ENCODE measurements at regions of chr15 and their contacts with region 1.

Region 1: GRCh38 chr15:97903971-97904572 is 56.4 kb upstream of the ARRDC4 start:
- DNase-seq: peak; percentile 74
- H3K4me3 Mint-ChIP-seq: peak overlapping the region; percentile 55
- H3K27ac Mint-ChIP-seq: no peak overlapping the region
- H3K4me1 Mint-ChIP-seq: peaks cover 19% of the 10 kb centered on the region
- H3K27me3 Mint-ChIP-seq: no peaks in the 10 kb centered on the region
- CTCF ChIP-seq: peak; percentile 80

Region 2: DNA sequence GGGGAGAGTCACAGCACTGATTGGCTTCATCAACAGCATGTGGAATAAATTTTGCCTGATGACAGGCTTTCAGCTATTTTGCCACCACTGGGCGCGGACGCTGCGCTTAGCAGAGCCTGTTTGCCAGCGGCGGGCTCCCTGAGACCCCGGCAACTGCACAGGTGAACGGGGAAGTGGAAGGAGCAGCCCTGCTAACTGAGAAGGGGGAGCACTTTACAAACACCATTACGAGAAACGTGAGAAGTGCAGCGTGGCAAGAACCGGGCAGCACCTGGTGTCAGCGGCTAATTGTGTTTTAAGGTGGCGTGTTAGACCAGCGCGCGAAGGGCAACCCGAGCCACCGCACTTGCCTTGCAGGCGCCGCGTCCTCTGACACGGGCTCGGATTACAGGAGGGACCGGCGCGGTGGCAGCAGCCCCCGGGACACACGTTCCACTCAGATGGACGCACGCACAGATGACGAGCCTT is 251.3 kb before region 1 on chr15:
- CTCF ChIA-PET with region 1: no interaction called
- POLR2A ChIA-PET with region 1: no interaction called
- intact Hi-C with region 1: no loop called
- DNase-seq: no peak
- H3K4me3 Mint-ChIP-seq: no peak overlapping the region
- H3K27ac Mint-ChIP-seq: no peak overlapping the region
- H3K4me1 Mint-ChIP-seq: no peaks in the 10 kb centered on the region
- H3K27me3 Mint-ChIP-seq: peaks cover 32% of the 10 kb centered on the region
- CTCF ChIP-seq: no peak

Region 3: DNA sequence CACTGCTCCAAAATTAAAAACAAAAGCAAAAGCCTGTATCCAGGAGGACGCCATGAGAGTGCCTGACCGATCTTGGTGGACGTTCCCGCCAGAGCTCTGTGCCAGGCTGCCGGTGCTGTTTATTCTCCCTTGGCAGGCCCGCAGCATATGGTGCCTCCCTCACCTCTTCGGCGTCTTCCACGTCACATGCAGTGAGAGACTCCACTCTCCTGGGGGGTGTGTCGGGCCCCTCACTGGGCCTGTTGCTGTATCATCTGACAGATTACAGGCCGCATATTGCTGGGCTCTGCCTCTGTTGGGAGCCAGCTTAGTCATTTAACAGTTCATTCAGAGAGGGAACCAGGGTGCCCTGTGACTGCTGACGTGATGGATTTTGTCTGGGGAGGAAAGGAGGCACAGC is 29.9 kb before region 1 on chr15:
- CTCF ChIA-PET with region 1: no interaction called
- POLR2A ChIA-PET with region 1: no interaction called
- intact Hi-C with region 1: no loop called
- DNase-seq: no peak
- H3K4me3 Mint-ChIP-seq: no peak overlapping the region
- H3K27ac Mint-ChIP-seq: no peak overlapping the region
- H3K4me1 Mint-ChIP-seq: no peaks in the 10 kb centered on the region
- H3K27me3 Mint-ChIP-seq: no peaks in the 10 kb centered on the region
- CTCF ChIP-seq: no peak

Region 4: DNA sequence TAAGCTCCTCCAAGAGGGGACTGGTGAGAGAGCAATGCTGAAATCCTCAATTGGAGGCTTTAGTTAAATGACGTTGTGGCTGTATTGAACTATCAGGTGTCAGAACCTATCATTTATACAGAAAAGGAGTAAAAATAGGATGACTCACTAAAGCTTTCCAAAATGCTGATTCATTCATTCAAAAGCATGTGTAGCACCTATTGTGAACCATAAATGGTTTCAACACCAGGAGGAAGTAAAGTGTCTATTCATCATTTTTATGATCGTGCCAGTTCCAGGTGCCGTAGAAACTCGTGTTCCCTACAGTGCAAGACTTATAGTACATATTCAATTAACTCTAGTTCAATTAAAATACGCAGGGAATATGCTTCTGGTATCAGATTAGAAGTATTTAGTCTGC is 10.1 kb before region 1 on chr15:
- CTCF ChIA-PET with region 1: interaction called, 24 read pairs
- POLR2A ChIA-PET with region 1: interaction called, 3 read pairs
- intact Hi-C with region 1: no loop called
- DNase-seq: peak; percentile 42
- H3K4me3 Mint-ChIP-seq: no peak overlapping the region
- H3K27ac Mint-ChIP-seq: no peak overlapping the region
- H3K4me1 Mint-ChIP-seq: no peaks in the 10 kb centered on the region
- H3K27me3 Mint-ChIP-seq: peaks cover 2% of the 10 kb centered on the region
- CTCF ChIP-seq: no peak

Region 5: DNA sequence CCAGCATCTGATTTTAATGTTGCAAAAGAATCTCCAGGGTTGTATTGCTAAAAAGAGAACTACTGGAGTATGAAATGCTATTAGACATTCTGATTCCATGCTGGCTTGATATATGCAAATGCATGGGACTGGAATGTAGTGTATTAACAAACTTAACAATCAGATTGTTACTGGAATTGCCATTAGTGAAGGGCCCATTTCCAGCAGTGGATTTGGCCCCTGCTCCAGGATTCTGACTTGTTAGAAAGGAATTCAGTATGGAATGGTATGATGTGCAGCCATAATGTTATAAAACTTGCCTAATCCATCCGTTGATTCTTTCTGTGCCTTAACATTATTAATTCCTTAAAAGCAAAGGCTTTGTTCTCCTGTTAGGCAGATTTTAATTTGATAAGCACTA is 64.3 kb after region 1 on chr15:
- CTCF ChIA-PET with region 1: interaction called, 11 read pairs
- POLR2A ChIA-PET with region 1: no interaction called
- intact Hi-C with region 1: loop called (anchors 5 kb)
- DNase-seq: peak; percentile 27
- H3K4me3 Mint-ChIP-seq: no peak overlapping the region
- H3K27ac Mint-ChIP-seq: no peak overlapping the region
- H3K4me1 Mint-ChIP-seq: peaks cover 23% of the 10 kb centered on the region
- H3K27me3 Mint-ChIP-seq: no peaks in the 10 kb centered on the region
- CTCF ChIP-seq: no peak

Region 6: DNA sequence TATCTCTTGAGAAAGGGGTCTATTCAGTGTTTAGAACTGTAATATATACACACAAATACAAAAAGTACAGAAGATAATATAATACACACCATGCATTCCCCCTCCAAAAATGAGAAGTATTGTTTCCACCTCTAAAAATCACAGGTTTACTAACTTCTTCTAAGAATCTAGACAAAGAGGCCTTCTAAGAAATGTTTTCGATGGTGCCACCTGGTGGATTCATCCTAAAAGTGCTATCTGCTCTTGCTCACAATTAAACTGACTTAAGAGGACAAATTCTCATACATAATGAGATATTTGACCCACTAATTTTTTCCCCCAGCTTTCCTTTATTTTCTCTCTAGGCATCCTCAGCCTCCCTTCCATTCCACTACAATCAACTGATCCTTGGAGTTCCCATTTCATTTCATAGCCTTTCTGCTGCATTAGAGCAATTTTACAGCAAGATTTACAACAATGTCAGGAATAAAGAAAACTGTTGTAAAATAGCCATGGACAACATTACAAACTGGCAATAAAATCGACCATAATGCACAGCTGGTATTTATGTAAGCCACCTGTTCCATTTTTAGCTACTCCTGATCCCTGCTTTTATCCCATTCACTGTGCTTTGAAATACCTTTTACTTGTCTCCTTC is 181.0 kb after region 1 on chr15:
- CTCF ChIA-PET with region 1: interaction called, 37 read pairs
- POLR2A ChIA-PET with region 1: no interaction called
- intact Hi-C with region 1: loop called (anchors 1 kb)
- DNase-seq: peak; percentile 74
- H3K4me3 Mint-ChIP-seq: no peak overlapping the region
- H3K27ac Mint-ChIP-seq: no peak overlapping the region
- H3K4me1 Mint-ChIP-seq: no peaks in the 10 kb centered on the region
- H3K27me3 Mint-ChIP-seq: no peaks in the 10 kb centered on the region
- CTCF ChIP-seq: peak; percentile 53

Measured in MCF 10A (cell line).